CD8-positive, alpha-beta T cell (primary cell): ENCODE measurements at regions of chrX and their contacts with region 1.

Region 1: DNA sequence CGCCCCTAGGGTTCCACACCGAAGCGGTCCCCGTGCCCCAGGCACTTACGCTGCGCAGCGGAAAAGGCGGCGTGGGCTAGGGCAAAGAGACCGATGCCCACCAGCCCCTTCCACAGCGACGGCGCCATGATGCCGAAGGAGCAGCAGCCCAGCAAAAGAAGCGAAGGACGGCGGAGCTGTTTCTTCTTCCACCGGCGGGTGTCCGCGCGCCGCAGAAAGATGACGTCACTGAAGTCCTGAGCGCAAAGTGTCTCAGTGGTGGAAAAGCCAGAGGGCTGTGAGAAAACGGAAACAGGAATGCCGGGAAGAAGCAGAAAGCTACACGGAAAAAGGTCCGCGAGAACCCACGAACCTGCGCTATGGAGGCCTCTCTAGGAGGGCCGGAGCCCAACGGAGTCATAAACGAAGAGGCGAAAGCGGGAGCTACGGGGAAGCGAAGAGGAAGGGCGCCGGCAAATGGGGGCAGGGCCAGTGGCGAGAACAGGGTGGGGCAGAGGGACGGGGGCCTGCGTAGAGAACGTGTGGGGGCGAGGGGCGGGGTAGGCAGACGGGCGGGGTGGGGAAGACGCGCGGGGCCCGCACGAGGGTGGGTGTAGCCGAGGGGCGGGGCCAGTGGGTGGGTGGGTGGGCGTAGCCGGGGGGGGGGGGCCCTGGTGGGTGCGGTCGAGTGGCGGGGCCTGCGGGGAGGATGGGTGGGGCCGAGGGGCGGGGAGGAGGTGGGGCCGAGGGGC is at the start of gene MMGT1:
- DNase-seq: peak; percentile 62 to 92 (median 78)
- ATAC-seq: peak; percentile 87
- H3K4me3 ChIP-seq: peak within 1 kb of the TSS; percentile 91 to 99
- H3K4me3 Mint-ChIP-seq: peak within 1 kb of the TSS; percentile 97
- H3K27ac ChIP-seq: peak within 1 kb of the TSS; percentile 93 to 94
- H3K27ac Mint-ChIP-seq: peak within 1 kb of the TSS; percentile 96
- H3K4me1 ChIP-seq: peaks cover 14% of the 10 kb centered on the region
- H3K4me1 Mint-ChIP-seq: peaks cover 36% of the 10 kb centered on the region
- H3K27me3 ChIP-seq: no peaks in the 10 kb centered on the region
- H3K27me3 Mint-ChIP-seq: no peaks in the 10 kb centered on the region
- CTCF ChIP-seq: no peak
- total RNA-seq, gene MMGT1: 35.0 to 35.6 TPM

Region 2: GRCh38 chrX:134377537-134377936 is 1596.2 kb before region 1 on chrX:
- CTCF ChIA-PET with region 1: no interaction called
- POLR2A ChIA-PET with region 1: no interaction called
- intact Hi-C with region 1: no loop called
- DNase-seq: peak in 5 of 9 experiments; percentile 0 to 50 (median 11)
- ATAC-seq: no peak
- H3K4me3 ChIP-seq: no peak overlapping the region
- H3K4me3 Mint-ChIP-seq: no peak overlapping the region
- H3K27ac ChIP-seq: no peak overlapping the region
- H3K27ac Mint-ChIP-seq: no peak overlapping the region
- H3K4me1 ChIP-seq: peaks cover 6% of the 10 kb centered on the region
- H3K4me1 Mint-ChIP-seq: peaks cover 24% of the 10 kb centered on the region
- H3K27me3 ChIP-seq: no peaks in the 10 kb centered on the region
- H3K27me3 Mint-ChIP-seq: no peaks in the 10 kb centered on the region
- CTCF ChIP-seq: no peak

Region 3: DNA sequence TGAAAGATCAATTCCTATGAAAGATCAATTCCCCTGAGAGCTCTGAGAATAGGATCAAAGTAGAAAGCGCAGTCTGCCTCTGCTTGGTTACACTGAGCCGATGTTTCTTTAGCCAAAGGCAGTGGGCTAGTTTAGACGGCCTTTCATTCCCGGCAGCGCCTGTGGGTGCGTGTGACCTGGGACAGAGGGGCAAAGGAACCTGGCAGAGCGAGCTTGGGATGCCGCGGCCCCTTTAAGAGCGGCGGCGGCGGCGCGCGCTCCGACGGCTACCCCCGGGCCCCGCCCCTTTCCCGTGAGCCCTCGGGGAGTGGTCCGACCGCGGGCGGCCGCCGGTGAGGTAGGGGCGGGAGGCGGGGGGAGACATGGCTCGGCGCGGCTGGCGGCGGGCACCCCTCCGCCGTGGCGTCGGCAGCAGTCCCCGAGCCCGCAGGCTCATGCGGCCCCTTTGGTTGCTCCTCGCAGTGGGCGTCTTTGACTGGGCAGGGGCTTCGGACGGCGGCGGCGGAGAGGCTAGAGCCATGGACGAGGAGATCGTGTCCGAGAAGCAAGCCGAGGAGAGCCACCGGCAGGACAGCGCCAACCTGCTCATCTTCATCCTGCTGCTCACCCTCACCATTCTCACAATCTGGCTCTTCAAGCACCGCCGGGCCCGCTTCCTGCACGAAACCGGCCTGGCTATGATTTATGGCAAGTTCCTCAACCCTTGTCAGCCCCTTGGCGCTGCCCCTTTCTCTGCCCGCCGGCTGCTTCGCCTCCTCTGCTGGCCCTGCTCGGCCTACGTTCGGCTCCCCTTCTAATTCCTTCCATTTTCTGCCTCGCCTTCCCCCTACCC is 11.6 kb after region 1 on chrX and contains the start of gene SLC9A6:
- CTCF ChIA-PET with region 1: no interaction called
- POLR2A ChIA-PET with region 1: interaction called, 22 read pairs
- intact Hi-C with region 1: loop called (anchors 1 kb)
- DNase-seq: peak in 8 of 9 experiments; percentile 46 to 80 (median 68)
- ATAC-seq: peak; percentile 88
- H3K4me3 ChIP-seq: peak within 1 kb of the TSS; percentile 71 to 83
- H3K4me3 Mint-ChIP-seq: peak within 1 kb of the TSS; percentile 91
- H3K27ac ChIP-seq: peak within 1 kb of the TSS; percentile 64 to 71
- H3K27ac Mint-ChIP-seq: peak within 1 kb of the TSS; percentile 93
- H3K4me1 ChIP-seq: peaks cover 26% of the 10 kb centered on the region
- H3K4me1 Mint-ChIP-seq: peaks cover 64% of the 10 kb centered on the region
- H3K27me3 ChIP-seq: no peaks in the 10 kb centered on the region
- H3K27me3 Mint-ChIP-seq: no peaks in the 10 kb centered on the region
- CTCF ChIP-seq: no peak
- total RNA-seq, gene SLC9A6: 15.9 to 18.7 TPM

Region 4: GRCh38 chrX:136138939-136139338 is 165.2 kb after region 1 on chrX:
- CTCF ChIA-PET with region 1: no interaction called
- POLR2A ChIA-PET with region 1: no interaction called
- intact Hi-C with region 1: no loop called
- DNase-seq: no peak
- ATAC-seq: no peak
- H3K4me3 ChIP-seq: no peak overlapping the region
- H3K4me3 Mint-ChIP-seq: no peak overlapping the region
- H3K27ac ChIP-seq: no peak overlapping the region
- H3K27ac Mint-ChIP-seq: no peak overlapping the region
- H3K4me1 ChIP-seq: peaks cover 1% of the 10 kb centered on the region
- H3K4me1 Mint-ChIP-seq: peaks cover 10% of the 10 kb centered on the region
- H3K27me3 ChIP-seq: no peaks in the 10 kb centered on the region
- H3K27me3 Mint-ChIP-seq: no peaks in the 10 kb centered on the region
- CTCF ChIP-seq: no peak

Region 5: GRCh38 chrX:136909706-136910564 is 936.2 kb after region 1 on chrX:
- CTCF ChIA-PET with region 1: no interaction called
- POLR2A ChIA-PET with region 1: no interaction called
- intact Hi-C with region 1: loop called in 1 of 2 experiments (anchors 10 kb)
- DNase-seq: peak; percentile 12 to 82 (median 60)
- ATAC-seq: peak; percentile 65
- H3K4me3 ChIP-seq: peak overlapping the region; percentile 46 to 73
- H3K4me3 Mint-ChIP-seq: peak overlapping the region; percentile 92
- H3K27ac ChIP-seq: peak overlapping the region; percentile 33 to 80
- H3K27ac Mint-ChIP-seq: peak overlapping the region; percentile 85
- H3K4me1 ChIP-seq: no peaks in the 10 kb centered on the region
- H3K4me1 Mint-ChIP-seq: peaks cover 20% of the 10 kb centered on the region
- H3K27me3 ChIP-seq: no peaks in the 10 kb centered on the region
- H3K27me3 Mint-ChIP-seq: no peaks in the 10 kb centered on the region
- CTCF ChIP-seq: no peak